Right ventricle myocardium inferior (tissue), 1 donor: ENCODE measurements at regions of chr10 and their contacts with region 1.

Region 1: GRCh38 chr10:100185364-100186252 is at the start of gene ERLIN1:
- DNase-seq: peak; percentile 96
- ATAC-seq: peak; percentile 99
- total RNA-seq, gene ERLIN1: 10.7 TPM

Region 2: GRCh38 chr10:100267237-100268104 is 81.9 kb after region 1 on chr10 and contains the start of gene CWF19L1:
- intact Hi-C with region 1: loop called (anchors 10 kb)
- DNase-seq: peak; percentile 90
- ATAC-seq: peak; percentile 96
- total RNA-seq, gene CWF19L1: 12.9 TPM

Region 3: GRCh38 chr10:100600218-100600617 is 414.6 kb after region 1 on chr10:
- intact Hi-C with region 1: no loop called
- DNase-seq: no peak
- ATAC-seq: no peak